Activated naive CD4-positive, alpha-beta T cell treated with anti-CD3 and anti-CD28 coated beads for 36 hours (primary cell): ENCODE measurements at regions of chr17 and their contacts with region 1.

Region 1: DNA sequence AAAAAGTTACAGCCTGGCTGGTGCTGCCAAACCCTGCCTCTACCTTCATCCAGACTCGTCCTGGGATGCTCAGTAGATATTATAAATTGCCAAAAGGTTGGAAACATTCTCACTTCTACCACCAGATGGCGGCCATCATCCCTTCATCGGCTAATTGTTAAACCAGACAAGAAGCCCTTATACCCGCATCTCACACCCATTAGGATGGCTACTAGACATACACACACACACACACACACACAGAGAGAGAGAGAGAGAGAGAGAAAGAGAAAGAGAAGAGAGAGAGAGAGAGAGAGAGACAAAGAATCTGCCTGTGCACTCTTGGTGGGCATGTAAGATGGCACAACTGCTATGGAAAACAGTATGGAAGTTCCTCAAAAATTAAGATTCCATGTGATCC is 15.0 kb upstream of the SCIMP start:
- DNase-seq: peak; percentile 85
- H3K4me3 Mint-ChIP-seq: no peak overlapping the region
- H3K27ac Mint-ChIP-seq: no peak overlapping the region
- H3K4me1 Mint-ChIP-seq: peaks cover 8% of the 10 kb centered on the region
- H3K27me3 Mint-ChIP-seq: no peaks in the 10 kb centered on the region

Region 2: DNA sequence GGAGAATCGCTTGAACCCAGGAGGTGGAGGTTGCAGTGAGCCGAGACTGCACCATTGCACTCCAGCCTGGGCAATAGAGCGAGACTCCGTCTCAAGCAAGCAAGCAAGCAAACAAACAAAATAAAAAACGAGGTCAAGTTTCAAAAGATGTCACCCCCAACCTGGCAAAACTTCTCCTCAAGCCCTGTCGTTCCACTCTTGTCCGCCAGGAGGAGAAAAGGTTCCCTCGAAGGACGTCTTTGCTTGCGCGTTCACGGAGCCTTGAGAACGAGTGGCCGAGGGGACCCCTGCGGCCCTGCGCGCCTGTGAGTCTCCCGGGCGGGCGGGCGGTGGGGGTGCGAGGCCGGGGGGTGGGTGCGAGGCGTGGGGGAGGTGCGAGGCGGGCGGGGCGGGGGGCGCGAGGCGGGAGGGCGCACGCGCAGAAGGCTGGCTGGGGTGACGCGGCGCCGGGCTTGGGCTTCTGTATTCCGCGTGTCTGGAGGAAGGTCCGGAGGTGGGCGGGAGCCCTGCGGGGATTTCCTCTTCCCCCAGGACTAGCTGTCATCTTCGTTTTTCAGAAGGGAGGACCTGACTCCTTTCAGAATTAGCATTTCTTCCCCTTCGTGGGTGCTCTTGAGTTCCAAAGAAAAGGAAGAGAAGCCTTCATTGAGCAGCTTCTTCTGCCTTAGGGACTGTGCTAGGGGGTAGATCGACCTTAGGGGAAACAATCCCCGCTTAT is 218.1 kb before region 1 on chr17:
- CTCF ChIA-PET with region 1: no interaction called
- intact Hi-C with region 1: no loop called
- DNase-seq: peak; percentile 91
- H3K4me3 Mint-ChIP-seq: peak overlapping the region; percentile 75
- H3K27ac Mint-ChIP-seq: peak overlapping the region; percentile 84
- H3K4me1 Mint-ChIP-seq: peaks cover 14% of the 10 kb centered on the region
- H3K27me3 Mint-ChIP-seq: peaks cover 2% of the 10 kb centered on the region

Region 3: DNA sequence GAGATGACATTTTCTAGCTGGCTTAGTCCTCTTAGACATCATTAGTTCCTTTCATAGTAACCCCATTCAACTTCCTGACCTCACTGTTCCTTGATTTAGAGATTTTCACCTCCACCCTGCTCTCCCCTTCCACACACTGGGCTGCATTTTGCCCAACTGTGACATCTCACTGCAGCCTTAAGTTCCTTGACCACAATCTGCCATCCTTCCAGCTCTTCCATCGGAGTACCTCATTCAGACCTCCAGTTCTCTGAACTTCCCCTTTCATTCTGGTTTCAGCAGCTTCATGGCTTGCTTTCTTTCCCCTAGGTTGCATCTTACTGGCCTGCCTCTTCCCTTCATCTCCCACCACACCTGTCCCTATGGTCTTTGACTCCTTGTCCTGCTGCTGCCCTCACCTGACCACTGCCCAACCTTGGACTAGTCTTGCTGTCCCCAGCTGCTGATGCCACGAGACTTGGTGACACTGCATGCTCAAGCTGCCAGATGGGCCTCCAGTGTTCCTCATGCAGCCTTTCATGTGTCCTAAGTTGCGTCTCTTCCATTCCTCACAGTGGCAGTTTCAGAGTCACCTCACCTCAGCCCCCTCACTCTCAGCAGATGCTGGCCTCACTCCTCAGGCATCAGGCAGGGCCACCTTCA is 129.1 kb after region 1 on chr17:
- CTCF ChIA-PET with region 1: interaction called, 4 read pairs
- intact Hi-C with region 1: loop called (anchors 5 kb)
- DNase-seq: no peak
- H3K4me3 Mint-ChIP-seq: no peak overlapping the region
- H3K27ac Mint-ChIP-seq: peak overlapping the region; percentile 8
- H3K4me1 Mint-ChIP-seq: peaks cover 2% of the 10 kb centered on the region
- H3K27me3 Mint-ChIP-seq: no peaks in the 10 kb centered on the region